Panc1 (cell line): ENCODE measurements at regions of chrX and their contacts with region 1.

Region 1: DNA sequence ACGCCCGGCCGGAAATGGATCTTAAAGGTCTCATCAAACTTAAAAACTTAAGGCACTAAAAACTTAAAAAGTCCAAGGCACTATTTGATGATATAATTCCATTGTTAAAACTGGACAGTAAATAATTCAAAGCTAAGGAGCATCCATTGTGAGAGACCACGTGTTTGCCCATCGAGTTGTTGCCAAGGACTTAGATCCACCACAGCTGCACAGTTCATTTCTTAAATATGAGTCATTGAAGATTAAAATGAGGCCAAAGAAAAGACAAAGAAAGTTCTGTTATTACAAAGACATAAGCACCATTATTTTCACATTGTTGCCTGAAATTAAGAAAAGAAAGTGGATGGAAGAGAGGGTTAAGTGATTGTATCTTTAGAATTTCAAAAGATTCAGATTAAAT is 411.5 kb upstream of the FTHL17 start:
- DNase-seq: no peak
- ATAC-seq: no peak
- H3K4me3 ChIP-seq: no peak overlapping the region
- H3K27ac ChIP-seq: no peak overlapping the region
- H3K4me1 ChIP-seq: no peaks in the 10 kb centered on the region
- H3K27me3 ChIP-seq: no peaks in the 10 kb centered on the region
- CTCF ChIP-seq: no peak

Region 2: GRCh38 chrX:31293409-31293808 is 189.9 kb before region 1 on chrX:
- CTCF ChIA-PET with region 1: no interaction called
- POLR2A ChIA-PET with region 1: interaction called, 12 read pairs
- in situ Hi-C with region 1: no loop called
- intact Hi-C with region 1: no loop called
- DNase-seq: no peak
- ATAC-seq: no peak
- H3K4me3 ChIP-seq: no peak overlapping the region
- H3K27ac ChIP-seq: no peak overlapping the region
- H3K4me1 ChIP-seq: no peaks in the 10 kb centered on the region
- H3K27me3 ChIP-seq: no peaks in the 10 kb centered on the region
- CTCF ChIP-seq: peak; percentile 27; the same call in 1 of the 2 replicates

Region 3: GRCh38 chrX:31384471-31384870 is 98.9 kb before region 1 on chrX:
- CTCF ChIA-PET with region 1: no interaction called
- POLR2A ChIA-PET with region 1: no interaction called
- in situ Hi-C with region 1: no loop called
- intact Hi-C with region 1: no loop called
- DNase-seq: no peak
- ATAC-seq: no peak
- H3K4me3 ChIP-seq: no peak overlapping the region
- H3K27ac ChIP-seq: no peak overlapping the region
- H3K4me1 ChIP-seq: no peaks in the 10 kb centered on the region
- H3K27me3 ChIP-seq: no peaks in the 10 kb centered on the region
- CTCF ChIP-seq: no peak

Region 4: DNA sequence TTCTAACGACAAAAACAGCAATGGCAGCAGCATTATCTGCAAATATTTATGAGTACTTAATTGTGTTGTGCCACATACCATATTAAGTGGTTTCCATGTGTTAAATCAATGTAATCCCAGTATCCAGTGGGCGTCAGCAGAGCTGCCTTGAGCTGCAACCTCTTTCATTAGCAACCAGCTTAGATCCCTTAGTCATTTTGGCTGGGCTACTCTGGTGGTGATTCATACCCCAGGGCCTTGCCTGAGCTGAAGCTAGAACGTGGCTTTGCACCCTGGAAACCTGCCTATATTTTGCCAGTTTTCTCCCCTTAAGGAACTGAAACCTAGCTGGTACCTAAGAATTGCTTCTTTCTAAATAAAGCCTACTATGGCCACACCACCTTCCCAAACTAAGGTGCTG is 62.8 kb after region 1 on chrX:
- CTCF ChIA-PET with region 1: no interaction called
- POLR2A ChIA-PET with region 1: no interaction called
- in situ Hi-C with region 1: no loop called
- intact Hi-C with region 1: no loop called
- DNase-seq: no peak
- ATAC-seq: no peak
- H3K4me3 ChIP-seq: no peak overlapping the region
- H3K27ac ChIP-seq: no peak overlapping the region
- H3K4me1 ChIP-seq: no peaks in the 10 kb centered on the region
- H3K27me3 ChIP-seq: no peaks in the 10 kb centered on the region
- CTCF ChIP-seq: no peak

Region 5: GRCh38 chrX:31656013-31656412 is 172.7 kb after region 1 on chrX:
- CTCF ChIA-PET with region 1: no interaction called
- POLR2A ChIA-PET with region 1: no interaction called
- in situ Hi-C with region 1: no loop called
- intact Hi-C with region 1: no loop called
- DNase-seq: no peak
- ATAC-seq: no peak
- H3K4me3 ChIP-seq: no peak overlapping the region
- H3K27ac ChIP-seq: no peak overlapping the region
- H3K4me1 ChIP-seq: no peaks in the 10 kb centered on the region
- H3K27me3 ChIP-seq: no peaks in the 10 kb centered on the region
- CTCF ChIP-seq: no peak